ENCODE measurements at regions of chr2 and their contacts with region 1.

Region 1: GRCh38 chr2:235595422-235596010 is 101.7 kb downstream of the AGAP1 start:
- DNase-seq: peak; percentile 69 to 73
- ATAC-seq: peak; percentile 57 to 85 (median 71)
- H3K4me3 ChIP-seq: no peak overlapping the region
- H3K27ac ChIP-seq: no peak overlapping the region
- H3K4me1 ChIP-seq: peaks cover 0 to 14% (median 8%) of the 10 kb centered on the region in 9 donors
- H3K27me3 ChIP-seq: no peaks in the 10 kb centered on the region
- CTCF ChIP-seq: peak; percentile 68 to 91 (median 87)

Region 2: GRCh38 chr2:235135990-235136561 is 459.4 kb before region 1 on chr2:
- intact Hi-C with region 1: loop called (anchors 1 to 5 kb)
- DNase-seq: peak; percentile 79 to 80
- ATAC-seq: peak; percentile 79 to 92 (median 88)
- H3K4me3 ChIP-seq: no peak overlapping the region
- H3K27ac ChIP-seq: no peak overlapping the region
- H3K4me1 ChIP-seq: peaks cover 0 to 4% (median 0%) of the 10 kb centered on the region in 9 donors
- H3K27me3 ChIP-seq: peaks cover 0 to 11% (median 0%) of the 10 kb centered on the region in 7 donors
- CTCF ChIP-seq: peak; percentile 23 to 83 (median 75)

Region 3: DNA sequence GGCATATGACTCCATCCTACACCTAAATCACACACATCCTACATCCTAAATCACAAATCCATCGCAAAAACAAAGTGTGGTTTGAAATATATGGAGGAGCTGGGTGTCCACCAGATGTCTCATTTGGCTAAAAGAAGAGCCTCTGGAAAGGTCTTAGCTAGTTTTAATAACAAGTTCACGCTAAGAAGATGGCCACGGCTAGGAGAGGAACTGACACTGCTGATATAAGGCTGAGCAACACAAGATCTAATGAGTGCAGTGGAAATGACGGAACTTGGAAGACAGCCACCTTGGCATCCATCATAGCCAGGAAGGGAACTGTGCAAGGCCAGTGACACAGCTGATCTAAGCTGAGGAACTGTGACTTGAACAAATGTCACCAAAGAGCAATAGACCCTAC is 161.7 kb before region 1 on chr2:
- intact Hi-C with region 1: loop called in 8 of 10 experiments (anchors 2 to 10 kb)
- DNase-seq: peak in 1 of 2 donors; percentile 79
- ATAC-seq: peak; percentile 90 to 96 (median 92)
- H3K4me3 ChIP-seq: no peak overlapping the region
- H3K27ac ChIP-seq: peak overlapping the region; percentile 7 to 79 (median 67)
- H3K4me1 ChIP-seq: peaks cover 0 to 23% (median 20%) of the 10 kb centered on the region in 9 donors
- H3K27me3 ChIP-seq: no peaks in the 10 kb centered on the region
- CTCF ChIP-seq: peak in 6 of 9 donors; percentile 14 to 52 (median 40)

Region 4: GRCh38 chr2:235500761-235501672 is 94.5 kb before region 1 on chr2:
- intact Hi-C with region 1: loop called in 2 of 10 experiments (anchors 5 kb)
- DNase-seq: no peak
- ATAC-seq: peak in 3 of 8 donors; percentile 59 to 68 (median 60)
- H3K4me3 ChIP-seq: peak overlapping the region in 6 of 10 donors; percentile 2 to 29 (median 23)
- H3K27ac ChIP-seq: peak overlapping the region in 6 of 10 donors; percentile 25 to 62 (median 46)
- H3K4me1 ChIP-seq: peaks cover 12 to 82% (median 43%) of the 10 kb centered on the region in 9 donors
- H3K27me3 ChIP-seq: peaks cover 0 to 5% (median 0%) of the 10 kb centered on the region in 7 donors
- CTCF ChIP-seq: no peak

Region 5: GRCh38 chr2:235669269-235669831 is 73.8 kb after region 1 on chr2:
- intact Hi-C with region 1: loop called (anchors 2 to 5 kb)
- DNase-seq: peak; percentile 68 to 77
- ATAC-seq: peak; percentile 50 to 82 (median 72)
- H3K4me3 ChIP-seq: peak overlapping the region in 9 of 10 donors; percentile 46 to 62 (median 55)
- H3K27ac ChIP-seq: no peak overlapping the region
- H3K4me1 ChIP-seq: peaks cover 0 to 49% (median 23%) of the 10 kb centered on the region in 9 donors
- H3K27me3 ChIP-seq: peaks cover 0 to 65% (median 0%) of the 10 kb centered on the region in 7 donors
- CTCF ChIP-seq: peak in 2 of 9 donors; percentile 14 to 21

Region 6: GRCh38 chr2:236753606-236754270 is 1158.2 kb after region 1 on chr2:
- intact Hi-C with region 1: no loop called
- DNase-seq: no peak
- ATAC-seq: peak in 2 of 8 donors; percentile 34 to 58
- H3K4me3 ChIP-seq: no peak overlapping the region
- H3K27ac ChIP-seq: no peak overlapping the region
- H3K4me1 ChIP-seq: peaks cover 3 to 24% (median 18%) of the 10 kb centered on the region in 9 donors
- H3K27me3 ChIP-seq: no peaks in the 10 kb centered on the region
- CTCF ChIP-seq: no peak

Measured in heart right ventricle (tissue), 16 donors.